Aorta (tissue), 5 donors: ENCODE measurements at regions of chr14 and their contacts with region 1.

Region 1: DNA sequence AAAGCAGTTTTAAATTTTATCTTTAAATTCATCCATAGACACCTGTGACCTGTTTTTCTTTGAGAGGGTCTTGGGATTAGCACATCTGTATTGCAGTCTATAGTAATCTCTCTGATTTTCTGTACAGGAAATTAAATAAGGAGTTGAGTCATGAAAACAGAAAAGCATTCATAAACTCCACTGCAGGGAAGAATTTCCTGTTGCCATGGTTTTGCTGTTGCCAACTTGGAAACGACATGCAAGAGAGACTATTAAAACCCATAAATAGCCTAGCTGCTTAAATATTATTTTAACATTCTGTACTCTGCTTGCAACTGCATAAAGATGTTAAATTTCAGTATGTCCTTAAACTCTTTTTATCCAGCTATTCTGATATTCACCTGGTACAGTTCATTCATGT is 281.0 kb upstream of the RGS6 start:
- DNase-seq: peak in 1 of 2 donors; percentile 56
- ATAC-seq: peak; percentile 86
- H3K4me3 ChIP-seq: no peak overlapping the region
- H3K27ac ChIP-seq: no peak overlapping the region
- H3K4me1 ChIP-seq: peaks cover 0 to 9% of the 10 kb centered on the region in 2 donors
- H3K27me3 ChIP-seq: no peaks in the 10 kb centered on the region

Region 2: DNA sequence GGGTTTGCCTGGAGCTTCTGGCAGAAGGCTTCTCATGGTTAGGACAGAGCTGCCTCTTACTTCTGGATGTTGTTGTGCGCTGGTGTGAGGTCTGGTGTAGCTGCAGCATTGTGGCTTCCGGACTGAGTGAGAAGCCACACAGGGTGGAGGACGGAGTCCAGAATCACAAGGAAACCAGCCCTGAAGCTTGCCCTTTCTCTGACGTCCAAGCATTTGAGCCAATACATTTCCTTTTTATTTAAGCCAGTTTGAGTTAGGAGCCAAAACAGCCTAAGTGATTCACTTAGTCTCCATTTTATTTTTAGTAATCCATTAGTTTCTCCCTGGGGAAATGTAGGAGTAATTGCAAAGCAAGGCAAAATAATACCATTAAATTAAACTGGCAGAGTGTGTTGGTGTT is 121.4 kb before region 1 on chr14:
- intact Hi-C with region 1: loop called in 1 of 2 experiments (anchors 5 kb)
- DNase-seq: peak in 1 of 2 donors; percentile 78
- ATAC-seq: peak; percentile 90
- H3K4me3 ChIP-seq: no peak overlapping the region
- H3K27ac ChIP-seq: peak overlapping the region in 1 of 2 donors; percentile 73
- H3K4me1 ChIP-seq: peaks cover 0 to 4% of the 10 kb centered on the region in 2 donors
- H3K27me3 ChIP-seq: no peaks in the 10 kb centered on the region

Region 3: DNA sequence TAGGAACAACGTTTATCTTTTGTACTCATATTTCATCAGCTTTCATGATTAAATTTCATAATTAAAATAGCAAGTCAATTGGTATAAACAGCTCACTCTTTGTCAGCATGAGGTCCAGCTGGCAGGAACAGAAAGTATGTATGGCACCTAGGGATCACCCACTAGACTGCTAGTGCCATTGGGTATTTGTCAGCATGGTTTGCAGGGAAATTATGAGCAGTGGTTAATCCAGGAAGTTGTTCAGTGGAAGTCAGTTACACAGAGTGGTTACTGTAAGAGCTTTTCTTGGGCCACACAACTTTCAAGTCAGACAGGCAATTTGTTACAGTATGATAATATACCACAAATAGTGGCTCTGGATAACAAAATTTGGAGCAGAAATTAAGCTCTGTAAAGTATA is 59.3 kb before region 1 on chr14:
- intact Hi-C with region 1: loop called in 1 of 2 experiments (anchors 10 kb)
- DNase-seq: no peak
- ATAC-seq: no peak
- H3K4me3 ChIP-seq: no peak overlapping the region
- H3K27ac ChIP-seq: no peak overlapping the region
- H3K4me1 ChIP-seq: peaks cover 1 to 8% of the 10 kb centered on the region in 2 donors
- H3K27me3 ChIP-seq: no peaks in the 10 kb centered on the region

Region 4: GRCh38 chr14:71606064-71606463 is 45.2 kb before region 1 on chr14:
- intact Hi-C with region 1: loop called in 1 of 2 experiments (anchors 10 kb)
- DNase-seq: no peak
- ATAC-seq: no peak
- H3K4me3 ChIP-seq: no peak overlapping the region
- H3K27ac ChIP-seq: no peak overlapping the region
- H3K4me1 ChIP-seq: peaks cover 0 to 8% of the 10 kb centered on the region in 2 donors
- H3K27me3 ChIP-seq: no peaks in the 10 kb centered on the region

Region 5: GRCh38 chr14:71711619-71712018 is 60.4 kb after region 1 on chr14:
- intact Hi-C with region 1: loop called in 1 of 2 experiments (anchors 10 kb)
- DNase-seq: no peak
- ATAC-seq: peak; percentile 81
- H3K4me3 ChIP-seq: no peak overlapping the region
- H3K27ac ChIP-seq: peak overlapping the region; percentile 96 to 97
- H3K4me1 ChIP-seq: peaks cover 2 to 8% of the 10 kb centered on the region in 2 donors
- H3K27me3 ChIP-seq: no peaks in the 10 kb centered on the region